ENCODE measurements at regions of chr20 and their contacts with region 1.

Region 1: GRCh38 chr20:23995905-23996666 is 7.5 kb upstream of the GGTLC1 start:
- DNase-seq: peak in 1 of 2 donors; percentile 51
- ATAC-seq: no peak
- H3K4me3 ChIP-seq: no peak overlapping the region
- H3K27ac ChIP-seq: no peak overlapping the region
- H3K4me1 ChIP-seq: no peaks in the 10 kb centered on the region
- H3K27me3 ChIP-seq: peaks cover 0 to 19% (median 3%) of the 10 kb centered on the region in 3 donors
- CTCF ChIP-seq: peak; percentile 78

Region 2: DNA sequence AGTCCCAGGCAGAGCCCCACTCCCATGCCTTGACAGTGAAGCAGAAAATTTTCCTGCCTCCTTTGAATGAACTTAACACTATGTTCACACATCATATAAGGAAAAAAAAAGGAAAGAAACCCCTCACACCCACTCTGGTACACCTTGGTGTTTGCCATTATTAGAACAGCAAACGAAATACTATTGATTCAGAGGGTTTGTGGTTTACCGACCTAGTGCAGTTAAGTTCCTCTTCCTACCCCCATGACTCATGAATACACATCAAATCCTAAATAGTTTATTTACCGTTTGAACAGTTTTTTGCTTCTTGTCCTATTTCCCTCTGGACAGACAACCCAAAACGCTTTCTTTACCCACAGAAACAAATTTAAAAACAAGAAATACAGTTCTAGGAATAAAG is 1649.4 kb before region 1 on chr20:
- intact Hi-C with region 1: loop called in 1 of 2 experiments (anchors 10 kb)
- DNase-seq: no peak
- ATAC-seq: no peak
- H3K4me3 ChIP-seq: no peak overlapping the region
- H3K27ac ChIP-seq: no peak overlapping the region
- H3K4me1 ChIP-seq: no peaks in the 10 kb centered on the region
- H3K27me3 ChIP-seq: no peaks in the 10 kb centered on the region
- CTCF ChIP-seq: no peak

Region 3: DNA sequence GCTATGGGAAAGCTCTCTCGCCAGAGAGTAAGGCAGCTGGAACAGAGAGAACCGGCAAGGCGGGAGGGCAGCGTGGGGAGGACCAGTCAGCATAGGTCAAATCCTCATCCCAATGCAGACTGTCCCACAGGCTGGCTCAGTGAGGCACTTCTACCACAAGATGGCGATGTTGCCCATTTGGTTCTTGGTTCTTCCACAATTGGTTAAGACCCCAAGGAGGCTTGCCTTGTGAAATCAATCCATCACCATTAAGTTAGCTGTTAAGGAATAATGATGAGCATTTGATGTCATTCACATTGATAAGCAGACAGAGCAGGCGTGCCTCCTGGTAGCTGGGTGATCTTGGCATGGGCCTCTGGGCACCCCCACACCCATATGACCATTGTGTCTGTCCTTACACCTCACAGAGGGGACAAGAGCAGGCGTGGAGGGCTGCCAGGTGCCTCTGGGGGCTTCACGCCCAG is 554.2 kb before region 1 on chr20:
- intact Hi-C with region 1: loop called (anchors 5 to 10 kb)
- DNase-seq: peak; percentile 46 to 61
- ATAC-seq: peak; percentile 70 to 88 (median 82)
- H3K4me3 ChIP-seq: no peak overlapping the region
- H3K27ac ChIP-seq: no peak overlapping the region
- H3K4me1 ChIP-seq: no peaks in the 10 kb centered on the region
- H3K27me3 ChIP-seq: no peaks in the 10 kb centered on the region
- CTCF ChIP-seq: peak; percentile 86

Region 4: DNA sequence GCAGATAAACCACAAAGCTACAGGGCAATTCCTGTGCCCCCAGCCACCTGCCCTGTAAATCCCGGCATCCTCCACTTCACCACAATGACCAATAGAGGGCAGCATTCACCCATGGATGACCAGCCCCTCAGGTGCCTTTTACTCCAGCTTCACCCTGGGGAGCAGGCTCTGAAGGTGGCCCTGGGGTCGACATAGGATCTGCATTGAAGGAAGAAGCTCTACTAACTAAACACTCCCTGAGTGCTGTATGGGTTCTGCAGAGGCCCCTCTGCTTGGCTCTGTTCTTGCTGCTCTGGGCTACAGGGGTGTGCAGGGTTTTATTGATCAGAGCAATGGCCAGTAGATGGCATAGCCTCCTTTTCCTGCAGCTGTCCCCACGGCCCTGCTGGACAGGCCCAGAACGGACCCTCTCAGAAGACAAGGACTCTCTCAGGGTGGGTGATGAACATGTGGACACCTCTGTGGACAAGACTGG is 327.6 kb before region 1 on chr20:
- intact Hi-C with region 1: loop called (anchors 5 kb)
- DNase-seq: no peak
- ATAC-seq: peak; percentile 86 to 91 (median 87)
- H3K4me3 ChIP-seq: no peak overlapping the region
- H3K27ac ChIP-seq: no peak overlapping the region
- H3K4me1 ChIP-seq: no peaks in the 10 kb centered on the region
- H3K27me3 ChIP-seq: no peaks in the 10 kb centered on the region
- CTCF ChIP-seq: peak; percentile 88

Region 5: GRCh38 chr20:23937303-23938117 is 58.6 kb before region 1 on chr20:
- intact Hi-C with region 1: loop called in 1 of 2 experiments (anchors 5 kb)
- DNase-seq: no peak
- ATAC-seq: peak; percentile 63 to 77 (median 71)
- H3K4me3 ChIP-seq: no peak overlapping the region
- H3K27ac ChIP-seq: no peak overlapping the region
- H3K4me1 ChIP-seq: no peaks in the 10 kb centered on the region
- H3K27me3 ChIP-seq: peaks cover 0 to 5% (median 0%) of the 10 kb centered on the region in 3 donors
- CTCF ChIP-seq: peak; percentile 65

Measured in psoas muscle (tissue), 8 donors.